IMR-90 (cell line): ENCODE measurements at regions of chr15 and their contacts with region 1.

Region 1: DNA sequence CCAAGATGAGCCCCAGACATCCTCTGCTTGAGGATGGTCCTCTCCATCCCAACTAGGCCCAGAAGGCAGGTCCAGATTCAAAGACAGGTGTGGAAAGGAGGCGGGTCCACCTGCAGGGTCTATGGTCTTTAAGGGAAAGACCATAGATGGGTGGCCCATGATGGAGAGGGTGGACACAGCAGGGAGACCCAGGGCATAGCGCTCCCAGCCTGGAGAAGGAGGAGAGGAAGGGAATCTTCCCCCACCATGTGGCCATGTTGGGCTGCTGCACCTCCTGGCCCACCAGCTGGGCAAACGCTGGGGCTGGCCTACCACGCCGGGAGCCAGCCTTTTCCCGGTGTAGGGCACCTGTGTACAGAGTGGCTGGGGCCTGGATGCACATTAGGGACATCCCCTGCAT is 265.2 kb upstream of the TLE3 start:
- DNase-seq: peak; percentile 18
- ATAC-seq: peak; percentile 83
- H3K4me3 ChIP-seq: no peak overlapping the region
- H3K27ac ChIP-seq: no peak overlapping the region
- H3K4me1 ChIP-seq: no peaks in the 10 kb centered on the region
- H3K27me3 ChIP-seq: peaks cover 25% of the 10 kb centered on the region; the same call in 1 of the 2 replicates
- CTCF ChIP-seq: peak; percentile 47
- POLR2A ChIP-seq: no peak
- RAD21 ChIP-seq: peak; percentile 63

Region 2: DNA sequence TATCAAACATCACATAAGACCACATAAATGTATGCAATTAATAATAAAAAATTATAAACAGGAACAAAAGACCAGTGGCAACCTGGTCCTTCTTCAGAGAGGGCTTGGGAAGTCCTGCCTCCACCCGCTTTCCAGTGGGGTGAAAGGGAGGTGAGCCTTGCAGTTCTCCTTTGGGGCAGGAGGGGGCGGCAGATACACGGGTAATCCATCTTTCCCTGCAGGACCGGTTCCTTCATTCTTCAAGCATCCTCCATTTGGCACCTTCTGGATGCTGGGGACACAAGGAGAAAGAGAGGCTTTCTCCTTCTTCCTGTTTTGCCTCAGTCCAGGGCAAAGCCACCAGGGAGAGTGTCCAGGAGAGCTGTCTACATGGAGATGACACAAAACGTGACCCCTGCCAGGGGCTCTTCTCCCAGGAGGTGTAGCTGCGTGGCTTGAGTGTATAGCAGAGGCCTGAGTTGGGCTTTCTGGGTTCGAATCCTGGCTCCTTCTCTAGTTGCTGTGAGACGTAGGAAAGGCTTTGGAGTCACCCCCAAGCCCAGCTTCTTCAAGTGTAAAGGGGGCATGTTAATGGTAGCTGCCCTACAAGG is 887.0 kb before region 1 on chr15:
- CTCF ChIA-PET with region 1: no interaction called
- POLR2A ChIA-PET with region 1: no interaction called
- dilution Hi-C with region 1: no loop called
- in situ Hi-C with region 1: no loop called
- intact Hi-C with region 1: loop called (anchors 5 kb)
- DNase-seq: peak; percentile 63
- ATAC-seq: peak; percentile 93
- H3K4me3 ChIP-seq: no peak overlapping the region
- H3K27ac ChIP-seq: no peak overlapping the region
- H3K4me1 ChIP-seq: peaks cover 9% of the 10 kb centered on the region
- H3K27me3 ChIP-seq: peaks cover 11% of the 10 kb centered on the region
- CTCF ChIP-seq: peak; percentile 92
- POLR2A ChIP-seq: no peak
- RAD21 ChIP-seq: peak; percentile 94

Region 3: GRCh38 chr15:69576035-69576526 is 786.8 kb before region 1 on chr15:
- CTCF ChIA-PET with region 1: no interaction called
- POLR2A ChIA-PET with region 1: no interaction called
- dilution Hi-C with region 1: no loop called
- in situ Hi-C with region 1: no loop called
- intact Hi-C with region 1: loop called (anchors 5 kb)
- DNase-seq: no peak
- ATAC-seq: peak; percentile 74
- H3K4me3 ChIP-seq: no peak overlapping the region
- H3K27ac ChIP-seq: no peak overlapping the region
- H3K4me1 ChIP-seq: no peaks in the 10 kb centered on the region
- H3K27me3 ChIP-seq: peaks cover 65% of the 10 kb centered on the region
- CTCF ChIP-seq: peak; percentile 59
- POLR2A ChIP-seq: no peak
- RAD21 ChIP-seq: peak; percentile 74

Region 4: DNA sequence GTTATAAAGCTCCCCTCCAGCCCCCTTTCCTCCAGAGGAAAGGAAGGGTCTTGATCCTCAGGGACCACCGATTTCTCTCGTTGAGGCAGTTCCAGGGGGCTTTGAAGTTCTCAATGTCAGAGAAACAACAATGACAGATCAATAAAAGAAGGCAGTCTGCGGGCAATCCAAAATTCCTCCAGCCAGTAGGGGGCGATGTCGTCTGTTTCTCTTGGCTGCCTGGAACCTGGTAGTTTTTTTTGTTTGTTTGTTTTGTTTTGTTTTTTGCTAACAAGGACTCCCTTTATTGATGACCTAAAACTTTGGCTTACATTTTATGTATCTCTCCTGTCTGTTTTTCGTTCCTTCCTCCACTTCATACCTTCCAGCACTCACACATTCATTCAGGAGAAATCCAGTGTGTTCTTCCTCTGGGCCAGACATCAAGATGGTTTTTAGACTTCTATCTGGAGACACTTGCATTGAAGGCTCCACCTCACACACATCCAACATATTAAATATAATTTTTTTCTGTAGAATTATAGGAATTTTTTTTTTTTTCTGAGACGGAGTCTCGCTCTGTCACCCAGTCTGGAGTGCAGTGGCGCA is 633.6 kb before region 1 on chr15:
- CTCF ChIA-PET with region 1: no interaction called
- POLR2A ChIA-PET with region 1: no interaction called
- dilution Hi-C with region 1: no loop called
- in situ Hi-C with region 1: no loop called
- intact Hi-C with region 1: loop called (anchors 2 kb)
- DNase-seq: peak; percentile 8
- ATAC-seq: no peak
- H3K4me3 ChIP-seq: no peak overlapping the region
- H3K27ac ChIP-seq: no peak overlapping the region
- H3K4me1 ChIP-seq: no peaks in the 10 kb centered on the region
- H3K27me3 ChIP-seq: peaks cover 56% of the 10 kb centered on the region
- CTCF ChIP-seq: peak; percentile 73
- POLR2A ChIP-seq: no peak
- RAD21 ChIP-seq: peak; percentile 79

Region 5: GRCh38 chr15:70196314-70197291 is 166.3 kb before region 1 on chr15:
- CTCF ChIA-PET with region 1: no interaction called
- POLR2A ChIA-PET with region 1: no interaction called
- dilution Hi-C with region 1: no loop called
- in situ Hi-C with region 1: no loop called
- intact Hi-C with region 1: no loop called
- DNase-seq: peak; percentile 88
- ATAC-seq: peak; percentile 10
- H3K4me3 ChIP-seq: no peak overlapping the region
- H3K27ac ChIP-seq: peak overlapping the region; percentile 22; the same call in 1 of the 2 replicates
- H3K4me1 ChIP-seq: peaks cover 14% of the 10 kb centered on the region
- H3K27me3 ChIP-seq: peaks cover 28% of the 10 kb centered on the region
- CTCF ChIP-seq: no peak
- POLR2A ChIP-seq: no peak
- RAD21 ChIP-seq: no peak

Region 6: DNA sequence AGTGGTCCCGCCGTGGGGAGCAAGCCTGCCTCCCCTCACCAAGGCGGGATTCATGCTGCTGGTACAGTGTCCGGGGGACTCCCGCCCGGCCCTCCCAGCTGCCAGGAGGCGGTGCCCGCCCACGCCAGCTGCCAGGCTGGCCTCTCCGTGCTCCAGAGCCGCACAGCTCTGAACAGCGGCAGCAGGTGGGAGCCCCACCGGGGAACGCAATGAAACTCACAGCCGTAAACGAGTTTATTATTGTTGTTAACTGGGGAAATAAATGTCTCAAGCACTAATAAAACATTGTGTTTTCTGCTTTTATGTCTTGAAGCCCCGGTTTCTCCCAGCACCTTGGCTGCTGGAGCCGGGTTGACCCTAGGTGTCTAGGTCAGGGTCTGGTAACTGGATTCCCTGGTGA is 52.5 kb after region 1 on chr15:
- CTCF ChIA-PET with region 1: no interaction called
- POLR2A ChIA-PET with region 1: no interaction called
- dilution Hi-C with region 1: no loop called
- in situ Hi-C with region 1: no loop called
- intact Hi-C with region 1: no loop called
- DNase-seq: no peak
- ATAC-seq: no peak
- H3K4me3 ChIP-seq: no peak overlapping the region
- H3K27ac ChIP-seq: no peak overlapping the region
- H3K4me1 ChIP-seq: no peaks in the 10 kb centered on the region
- H3K27me3 ChIP-seq: peaks cover 80% of the 10 kb centered on the region
- CTCF ChIP-seq: no peak
- POLR2A ChIP-seq: no peak
- RAD21 ChIP-seq: no peak